ENCODE measurements at regions of chr20 and their contacts with region 1.

Region 1: DNA sequence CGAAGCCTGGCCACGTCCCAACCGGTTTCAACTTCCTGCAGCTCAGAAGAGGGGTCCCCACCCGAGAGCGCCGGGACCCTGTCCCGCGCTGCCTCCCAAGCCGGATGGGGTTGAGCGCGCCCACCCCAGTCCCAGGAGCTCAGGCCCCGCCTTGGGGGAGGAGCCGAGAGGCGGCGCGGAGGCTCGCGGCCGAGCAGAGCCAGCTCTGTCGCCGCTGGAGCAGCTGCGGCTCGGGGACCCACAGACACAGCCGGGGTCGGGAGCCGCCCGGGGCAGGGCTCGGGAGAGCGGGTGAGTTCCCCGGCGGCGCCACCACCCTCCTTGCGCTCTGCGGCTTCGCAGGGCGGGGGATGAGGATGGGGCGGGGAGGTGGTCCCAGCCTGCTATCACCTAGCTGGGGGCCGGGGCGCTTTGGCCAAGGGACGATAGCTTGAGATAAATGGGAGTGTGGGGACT is at the start of gene PPP1R16B:
- DNase-seq: no peak
- H3K4me3 ChIP-seq: peak within 1 kb of the TSS; percentile 43
- H3K27ac ChIP-seq: no peak within 1 kb of the TSS
- H3K4me1 ChIP-seq: peaks cover 4% of the 10 kb centered on the region
- H3K27me3 ChIP-seq: no peaks in the 10 kb centered on the region
- CTCF ChIP-seq: no peak
- EP300 ChIP-seq: no peak
- POLR2A ChIP-seq: no peak
- total RNA-seq, gene PPP1R16B: 0.92 to 56.4 (median 2.9) TPM

Region 2: GRCh38 chr20:38836991-38837390 is 31.5 kb after region 1 on chr20:
- intact Hi-C with region 1: loop called in 1 of 4 experiments (anchors 1 kb)
- DNase-seq: no peak
- H3K4me3 ChIP-seq: no peak overlapping the region
- H3K27ac ChIP-seq: no peak overlapping the region
- H3K4me1 ChIP-seq: no peaks in the 10 kb centered on the region
- H3K27me3 ChIP-seq: no peaks in the 10 kb centered on the region
- CTCF ChIP-seq: no peak
- EP300 ChIP-seq: no peak
- POLR2A ChIP-seq: no peak

Measured in ovary (tissue), 10 donors.